B cell (primary cell): ENCODE measurements at regions of chr10 and their contacts with region 1.

Region 1: DNA sequence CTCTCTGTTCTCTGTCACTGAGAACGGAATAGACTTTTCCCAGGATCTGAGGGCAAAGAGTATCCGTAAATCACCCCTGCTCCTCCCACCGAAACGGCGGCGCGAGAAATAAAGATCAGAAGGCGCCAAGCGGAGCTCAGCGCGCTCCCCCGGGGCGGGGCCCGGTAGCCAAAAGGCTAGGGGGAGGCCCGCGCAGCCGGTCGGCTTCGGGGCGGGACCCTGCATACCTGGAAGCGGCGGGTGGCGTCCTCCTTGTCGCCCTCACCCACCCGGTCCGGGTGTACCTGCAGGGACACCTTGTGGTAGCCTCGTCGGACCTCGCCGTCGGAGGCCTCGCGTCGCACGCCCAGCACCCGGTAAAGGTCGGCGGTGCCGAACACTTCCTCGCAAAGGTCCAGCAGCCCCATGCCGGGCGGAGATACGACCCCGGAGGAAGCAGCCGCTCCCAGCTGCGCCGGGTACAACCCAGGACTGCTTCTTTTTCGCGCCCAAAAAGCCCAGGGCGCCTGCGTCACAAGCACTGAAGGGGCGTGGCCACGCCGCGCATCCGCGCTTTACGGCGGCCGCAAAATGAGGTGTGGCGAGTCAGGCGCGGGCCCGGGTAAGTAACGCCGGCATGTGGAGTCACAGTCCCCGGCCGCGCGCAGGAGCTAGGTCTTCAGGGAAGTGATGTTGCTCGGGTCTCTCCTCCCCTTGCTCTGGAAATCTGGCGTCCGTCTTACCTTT is at the start of gene DNAJC9:
- DNase-seq: peak; percentile 97
- ATAC-seq: peak; percentile 86
- H3K4me3 ChIP-seq: peak within 1 kb of the TSS; percentile 75 to 83 (median 79)
- H3K4me3 Mint-ChIP-seq: peak within 1 kb of the TSS; percentile 96
- H3K27ac ChIP-seq: peak within 1 kb of the TSS; percentile 85 to 86
- H3K27ac Mint-ChIP-seq: peak within 1 kb of the TSS; percentile 94
- H3K4me1 ChIP-seq: peaks cover 25 to 27% of the 10 kb centered on the region in 2 donors
- H3K4me1 Mint-ChIP-seq: peaks cover 54% of the 10 kb centered on the region
- H3K27me3 ChIP-seq: no peaks in the 10 kb centered on the region
- H3K27me3 Mint-ChIP-seq: no peaks in the 10 kb centered on the region
- CTCF ChIP-seq: no peak
- total RNA-seq, gene DNAJC9: 25.6 and 28.2 TPM in 2 replicates

Region 2: DNA sequence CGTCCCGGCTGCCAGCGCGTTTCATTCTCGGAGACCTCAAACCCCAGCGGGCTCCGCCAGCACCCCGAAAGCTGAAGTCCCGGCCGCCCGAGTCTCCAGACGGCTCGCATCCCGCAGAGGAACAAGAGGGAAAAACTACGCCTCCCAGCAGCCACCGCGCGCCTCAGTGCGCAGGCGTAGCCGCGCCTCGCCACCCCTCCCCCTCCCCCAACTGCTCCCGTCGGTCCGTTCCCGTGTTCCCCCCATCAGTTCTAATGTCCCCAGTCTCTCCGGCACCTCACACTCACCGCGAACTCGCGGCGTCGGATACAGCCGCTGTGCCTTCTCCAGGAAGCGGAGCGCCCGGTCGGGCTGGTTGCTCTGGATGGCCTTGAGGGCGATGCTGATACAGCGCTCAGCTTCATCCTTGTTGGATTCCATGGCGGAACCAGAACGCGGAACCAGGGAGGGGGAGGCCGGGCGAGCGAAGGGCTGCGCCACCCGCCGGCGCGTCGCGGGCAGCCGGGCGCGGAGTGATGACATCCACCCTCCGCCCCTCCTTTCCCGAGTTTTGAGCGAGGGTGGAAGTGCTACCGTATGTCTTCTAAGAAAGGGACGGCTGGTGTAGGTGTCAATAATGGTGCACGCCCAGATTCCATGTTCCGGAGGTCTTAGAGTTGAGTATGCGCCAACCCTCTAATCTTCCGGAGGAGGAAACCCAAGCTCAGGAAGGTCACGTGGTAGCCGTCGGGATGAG is 892.3 kb before region 1 on chr10 and contains the start of gene DNAJB12:
- CTCF ChIA-PET with region 1: no interaction called
- POLR2A ChIA-PET with region 1: no interaction called
- intact Hi-C with region 1: loop called (anchors 10 kb)
- DNase-seq: peak; percentile 97
- ATAC-seq: peak; percentile 87
- H3K4me3 ChIP-seq: peak within 1 kb of the TSS; percentile 65 to 98 (median 97)
- H3K4me3 Mint-ChIP-seq: peak within 1 kb of the TSS; percentile 99
- H3K27ac ChIP-seq: peak within 1 kb of the TSS; percentile 90 to 97
- H3K27ac Mint-ChIP-seq: peak within 1 kb of the TSS; percentile 99
- H3K4me1 ChIP-seq: peaks cover 15 to 17% of the 10 kb centered on the region in 2 donors
- H3K4me1 Mint-ChIP-seq: peaks cover 39% of the 10 kb centered on the region
- H3K27me3 ChIP-seq: no peaks in the 10 kb centered on the region
- H3K27me3 Mint-ChIP-seq: no peaks in the 10 kb centered on the region
- CTCF ChIP-seq: no peak
- total RNA-seq, gene DNAJB12: 42.3 and 44.1 TPM in 2 replicates

Region 3: DNA sequence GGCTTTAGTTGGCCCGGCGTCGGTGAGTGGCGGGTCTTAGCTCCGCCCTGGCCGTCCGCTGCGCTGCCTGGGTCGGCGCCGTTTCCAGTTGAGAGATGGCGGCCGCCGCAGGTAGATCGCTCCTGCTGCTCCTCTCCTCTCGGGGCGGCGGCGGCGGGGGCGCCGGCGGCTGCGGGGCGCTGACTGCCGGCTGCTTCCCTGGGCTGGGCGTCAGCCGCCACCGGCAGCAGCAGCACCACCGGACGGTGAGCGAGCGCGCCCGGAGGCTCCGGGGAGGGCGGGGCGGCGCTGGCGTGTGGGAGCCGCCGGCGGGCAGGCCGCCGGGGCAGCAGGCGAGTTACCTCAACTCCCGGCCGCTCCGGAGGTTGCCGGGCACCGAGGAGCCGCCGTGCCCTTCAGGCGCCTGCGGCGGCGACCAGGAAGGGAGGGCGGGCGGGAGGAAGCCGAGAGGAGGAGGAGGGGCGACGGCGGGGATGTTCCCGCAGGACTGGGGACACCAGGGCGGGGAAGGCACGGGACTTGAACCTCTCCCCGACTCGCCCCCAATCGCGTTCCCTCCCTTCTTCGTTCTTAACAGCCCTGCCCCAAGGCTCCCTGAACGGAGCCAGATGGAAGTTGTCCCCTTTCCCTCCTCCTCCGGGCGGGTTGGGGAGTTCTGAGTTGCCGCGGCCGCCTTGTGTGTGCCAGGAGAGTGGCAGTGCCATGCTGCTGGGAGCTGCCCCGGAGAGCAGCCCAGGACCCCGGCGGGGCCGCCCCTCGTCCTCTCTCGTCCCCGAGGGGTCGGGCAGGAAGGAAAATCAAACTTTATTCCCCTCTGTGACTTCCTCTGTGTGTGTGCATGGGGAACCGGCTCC is 554.7 kb before region 1 on chr10 and contains the start of gene MCU:
- CTCF ChIA-PET with region 1: no interaction called
- POLR2A ChIA-PET with region 1: no interaction called
- intact Hi-C with region 1: loop called (anchors 5 kb)
- DNase-seq: peak; percentile 94
- ATAC-seq: peak; percentile 95
- H3K4me3 ChIP-seq: peak within 1 kb of the TSS; percentile 64 to 91 (median 79)
- H3K4me3 Mint-ChIP-seq: peak within 1 kb of the TSS; percentile 95
- H3K27ac ChIP-seq: peak within 1 kb of the TSS; percentile 58 to 72
- H3K27ac Mint-ChIP-seq: peak within 1 kb of the TSS; percentile 91
- H3K4me1 ChIP-seq: peaks cover 28 to 33% of the 10 kb centered on the region in 2 donors
- H3K4me1 Mint-ChIP-seq: peaks cover 43% of the 10 kb centered on the region
- H3K27me3 ChIP-seq: no peaks in the 10 kb centered on the region
- H3K27me3 Mint-ChIP-seq: no peaks in the 10 kb centered on the region
- CTCF ChIP-seq: no peak
- total RNA-seq, gene MCU: 17.6 and 21.1 TPM in 2 replicates

Region 4: GRCh38 chr10:72753760-72754231 is 493.1 kb before region 1 on chr10:
- CTCF ChIA-PET with region 1: no interaction called
- POLR2A ChIA-PET with region 1: no interaction called
- intact Hi-C with region 1: no loop called
- DNase-seq: peak; percentile 5
- ATAC-seq: no peak
- H3K4me3 ChIP-seq: no peak overlapping the region
- H3K4me3 Mint-ChIP-seq: no peak overlapping the region
- H3K27ac ChIP-seq: no peak overlapping the region
- H3K27ac Mint-ChIP-seq: no peak overlapping the region
- H3K4me1 ChIP-seq: peaks cover 3 to 7% of the 10 kb centered on the region in 2 donors
- H3K4me1 Mint-ChIP-seq: peaks cover 15% of the 10 kb centered on the region
- H3K27me3 ChIP-seq: no peaks in the 10 kb centered on the region
- H3K27me3 Mint-ChIP-seq: no peaks in the 10 kb centered on the region
- CTCF ChIP-seq: no peak

Region 5: GRCh38 chr10:73167783-73168464 is 79.0 kb before region 1 on chr10 and contains the starts of genes ECD and FAM149B1:
- CTCF ChIA-PET with region 1: no interaction called
- POLR2A ChIA-PET with region 1: no interaction called
- intact Hi-C with region 1: loop called (anchors 1 kb)
- DNase-seq: peak; percentile 95
- ATAC-seq: peak; percentile 97
- H3K4me3 ChIP-seq: peak within 1 kb of the TSS; percentile 72 to 99 (median 98)
- H3K4me3 Mint-ChIP-seq: peak within 1 kb of the TSS; percentile 100
- H3K27ac ChIP-seq: peak within 1 kb of the TSS; percentile 90
- H3K27ac Mint-ChIP-seq: peak within 1 kb of the TSS; percentile 97
- H3K4me1 ChIP-seq: peaks cover 18 to 19% of the 10 kb centered on the region in 2 donors
- H3K4me1 Mint-ChIP-seq: peaks cover 37% of the 10 kb centered on the region
- H3K27me3 ChIP-seq: no peaks in the 10 kb centered on the region
- H3K27me3 Mint-ChIP-seq: no peaks in the 10 kb centered on the region
- CTCF ChIP-seq: no peak
- total RNA-seq, gene ECD: 37.1 and 38.8 TPM in 2 replicates
- total RNA-seq, gene FAM149B1: 22.5 and 25.9 TPM in 2 replicates

Region 6: GRCh38 chr10:73358331-73359279 is 111.7 kb after region 1 on chr10 and contains the start of gene CFAP70:
- CTCF ChIA-PET with region 1: no interaction called
- POLR2A ChIA-PET with region 1: no interaction called
- intact Hi-C with region 1: loop called (anchors 1 kb)
- DNase-seq: peak; percentile 95
- ATAC-seq: peak; percentile 97
- H3K4me3 ChIP-seq: peak within 1 kb of the TSS; percentile 58 to 84 (median 73)
- H3K4me3 Mint-ChIP-seq: peak within 1 kb of the TSS; percentile 98
- H3K27ac ChIP-seq: peak within 1 kb of the TSS; percentile 26 to 79
- H3K27ac Mint-ChIP-seq: peak within 1 kb of the TSS; percentile 94
- H3K4me1 ChIP-seq: peaks cover 6 to 11% of the 10 kb centered on the region in 2 donors
- H3K4me1 Mint-ChIP-seq: peaks cover 15% of the 10 kb centered on the region
- H3K27me3 ChIP-seq: peaks cover 0 to 6% (median 0%) of the 10 kb centered on the region in 4 experiments
- H3K27me3 Mint-ChIP-seq: peaks cover 4% of the 10 kb centered on the region
- CTCF ChIP-seq: no peak
- total RNA-seq, gene CFAP70: 2.9 and 3.6 TPM in 2 replicates

Region 7: DNA sequence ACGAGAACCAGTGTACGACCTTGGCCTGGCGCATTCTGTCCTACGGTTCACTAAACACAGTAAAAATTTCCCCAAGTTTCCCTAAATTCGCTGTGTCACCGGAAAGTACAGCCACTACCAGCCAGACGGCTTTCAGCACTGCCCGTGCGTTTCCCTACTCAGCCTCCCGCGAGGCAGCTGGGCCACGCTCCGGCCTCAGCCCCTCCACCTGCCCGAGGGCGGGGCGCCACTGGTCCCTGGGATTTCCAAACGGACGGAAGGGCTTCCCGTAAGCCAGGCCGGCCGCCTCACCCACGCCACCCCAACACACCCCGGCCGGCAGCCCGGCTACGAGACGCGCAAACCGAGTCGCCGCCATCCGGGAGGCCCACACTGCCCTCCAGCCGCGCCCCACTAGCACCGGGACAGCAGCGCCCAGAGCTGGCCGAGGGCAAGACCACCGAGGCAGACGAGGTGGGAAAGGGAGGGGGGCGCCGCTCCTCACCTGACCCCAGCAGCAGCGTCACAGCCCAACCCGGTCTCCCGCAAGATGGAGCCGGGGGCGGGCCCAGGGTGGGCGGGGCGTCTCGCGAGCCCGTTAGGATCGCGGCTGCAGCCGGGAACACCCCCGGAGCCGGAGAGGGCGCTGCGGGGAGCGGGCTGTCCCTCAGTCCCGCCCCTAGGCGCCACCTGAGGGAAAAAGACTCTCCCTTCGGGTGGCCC is 166.7 kb after region 1 on chr10 and contains the start of gene ANXA7:
- CTCF ChIA-PET with region 1: no interaction called
- POLR2A ChIA-PET with region 1: interaction called, 5 read pairs
- intact Hi-C with region 1: loop called (anchors 1 kb)
- DNase-seq: peak; percentile 92
- ATAC-seq: peak; percentile 95
- H3K4me3 ChIP-seq: peak within 1 kb of the TSS; percentile 70 to 94 (median 93)
- H3K4me3 Mint-ChIP-seq: peak within 1 kb of the TSS; percentile 96
- H3K27ac ChIP-seq: peak within 1 kb of the TSS; percentile 84 to 97
- H3K27ac Mint-ChIP-seq: peak within 1 kb of the TSS; percentile 96
- H3K4me1 ChIP-seq: peaks cover 15 to 21% of the 10 kb centered on the region in 2 donors
- H3K4me1 Mint-ChIP-seq: peaks cover 50% of the 10 kb centered on the region
- H3K27me3 ChIP-seq: no peaks in the 10 kb centered on the region
- H3K27me3 Mint-ChIP-seq: no peaks in the 10 kb centered on the region
- CTCF ChIP-seq: peak; percentile 37
- total RNA-seq, gene ANXA7: 86.7 and 90.0 TPM in 2 replicates

Region 8: DNA sequence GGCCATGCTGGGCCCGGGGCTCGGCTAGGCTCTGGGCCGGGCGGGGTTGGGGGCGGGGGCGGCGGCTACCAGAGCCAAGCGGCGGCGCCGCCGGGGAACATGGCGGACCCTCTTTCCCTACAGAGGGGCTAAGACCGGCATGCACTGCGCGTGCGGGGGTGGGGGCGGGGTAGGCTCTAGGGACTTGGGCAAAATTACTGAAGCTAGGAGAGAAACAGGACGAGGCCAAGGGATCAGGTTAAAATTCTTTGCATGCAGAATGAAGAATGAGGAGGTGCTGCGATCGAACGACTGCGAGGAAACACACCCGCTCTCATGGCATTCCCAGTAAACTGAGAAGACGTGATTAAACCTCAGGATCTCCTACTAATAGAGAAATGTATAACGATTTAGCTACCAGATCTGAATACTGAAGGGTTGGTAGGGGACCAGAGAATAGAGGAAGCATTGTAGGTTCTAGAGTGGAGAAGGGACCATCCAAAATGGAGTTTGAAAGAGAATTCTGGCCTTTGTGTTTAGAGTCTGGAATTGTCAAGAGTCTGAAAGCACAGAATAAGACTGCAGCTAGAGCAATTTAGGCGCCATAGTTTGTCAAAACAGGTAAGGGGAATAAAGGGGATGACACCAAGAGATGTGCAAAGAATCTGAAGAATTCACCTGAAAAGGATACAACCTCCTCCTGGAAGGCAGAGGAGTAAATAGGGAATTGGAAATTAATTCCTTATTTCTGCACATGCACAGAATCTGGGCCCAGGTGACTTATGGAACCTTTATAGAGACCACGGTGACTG is 249.1 kb after region 1 on chr10 and contains the start of gene PPP3CB:
- CTCF ChIA-PET with region 1: no interaction called
- POLR2A ChIA-PET with region 1: interaction called, 3 read pairs
- intact Hi-C with region 1: loop called (anchors 2 kb)
- DNase-seq: peak; percentile 94
- ATAC-seq: peak; percentile 70
- H3K4me3 ChIP-seq: peak within 1 kb of the TSS; percentile 63 to 97 (median 85)
- H3K4me3 Mint-ChIP-seq: peak within 1 kb of the TSS; percentile 94
- H3K27ac ChIP-seq: peak within 1 kb of the TSS; percentile 89 to 93
- H3K27ac Mint-ChIP-seq: peak within 1 kb of the TSS; percentile 96
- H3K4me1 ChIP-seq: peaks cover 30 to 40% of the 10 kb centered on the region in 2 donors
- H3K4me1 Mint-ChIP-seq: peaks cover 52% of the 10 kb centered on the region
- H3K27me3 ChIP-seq: no peaks in the 10 kb centered on the region
- H3K27me3 Mint-ChIP-seq: no peaks in the 10 kb centered on the region
- CTCF ChIP-seq: no peak
- total RNA-seq, gene PPP3CB: 51.2 and 52.8 TPM in 2 replicates